ENCODE measurements at regions of chr10 and their contacts with region 1.

Region 1: GRCh38 chr10:86899670-86900276 is 57.6 kb downstream of the MMRN2 start:
- DNase-seq: peak in 4 of 5 donors; percentile 54 to 73 (median 64)
- ATAC-seq: peak in 3 of 4 donors; percentile 35 to 63 (median 58)
- H3K4me3 ChIP-seq: no peak overlapping the region
- H3K27ac ChIP-seq: peak overlapping the region in 7 of 12 donors; percentile 20 to 87 (median 64)
- H3K4me1 ChIP-seq: peaks cover 0 to 37% (median 18%) of the 10 kb centered on the region in 12 donors
- H3K27me3 ChIP-seq: peaks cover 0 to 6% (median 0%) of the 10 kb centered on the region in 9 donors
- CTCF ChIP-seq: peak; percentile 60 to 85 (median 78)
- POLR2A ChIP-seq: no peak

Region 2: DNA sequence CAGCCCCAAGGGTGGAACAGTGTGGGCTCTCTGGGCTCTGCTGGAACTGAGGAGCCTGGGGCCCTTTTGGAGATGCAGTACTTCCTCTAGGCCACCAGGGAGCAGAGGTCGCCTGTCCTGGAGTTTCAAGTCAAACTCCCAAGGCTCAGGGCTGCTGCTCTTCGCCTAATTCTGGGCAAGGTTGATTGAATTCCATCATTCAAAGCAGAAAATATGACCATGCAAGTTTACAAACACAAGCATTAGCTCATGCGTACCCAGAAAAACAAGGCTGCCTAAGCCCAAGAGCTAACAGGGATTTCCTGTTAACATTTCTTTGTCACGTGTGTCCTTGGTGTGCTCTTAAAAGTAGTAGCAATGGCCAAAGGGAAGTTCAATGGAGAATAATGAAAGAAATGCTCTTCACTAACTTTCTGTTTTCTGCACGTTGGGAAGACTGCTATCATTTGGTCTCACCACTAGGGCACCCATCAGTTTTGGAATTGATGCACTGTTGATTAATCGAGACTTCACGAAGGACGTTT is 211.3 kb before region 1 on chr10:
- intact Hi-C with region 1: loop called in 9 of 10 experiments (anchors 1 to 5 kb)
- DNase-seq: peak in 4 of 5 donors; percentile 52 to 73 (median 70)
- ATAC-seq: no peak
- H3K4me3 ChIP-seq: no peak overlapping the region
- H3K27ac ChIP-seq: peak overlapping the region in 11 of 12 donors; percentile 22 to 99 (median 40)
- H3K4me1 ChIP-seq: peaks cover 0 to 72% (median 25%) of the 10 kb centered on the region in 12 donors
- H3K27me3 ChIP-seq: peaks cover 0 to 2% (median 0%) of the 10 kb centered on the region in 9 donors
- CTCF ChIP-seq: peak; percentile 68 to 85 (median 80)
- POLR2A ChIP-seq: no peak

Region 3: DNA sequence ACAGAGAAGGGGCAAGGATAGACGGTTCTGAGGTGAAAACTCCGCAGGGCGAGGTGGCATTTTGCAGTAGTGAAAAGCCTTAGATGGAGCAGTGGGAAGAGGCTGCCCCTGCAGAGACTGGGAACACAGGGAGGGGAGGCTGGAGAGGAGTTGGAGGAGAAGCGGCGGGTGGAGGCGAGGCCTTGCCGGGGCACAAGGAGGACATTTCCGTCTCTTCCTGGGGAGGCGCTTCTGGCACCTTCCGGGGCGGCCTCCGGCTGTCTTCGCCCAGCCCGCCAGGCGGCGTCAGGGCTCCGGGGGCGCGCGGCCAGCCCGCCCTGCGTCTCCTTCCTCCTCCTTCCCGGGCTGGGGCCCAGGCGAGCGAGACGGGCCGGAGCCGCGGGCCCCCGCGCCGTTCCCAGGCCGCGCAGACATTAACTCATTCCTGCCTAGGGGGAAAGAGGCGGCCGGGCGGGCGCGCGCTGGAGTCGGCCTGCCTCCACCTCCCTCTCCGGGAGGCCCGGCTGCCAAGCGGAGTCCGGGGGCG is 188.7 kb before region 1 on chr10:
- intact Hi-C with region 1: loop called in 5 of 10 experiments (anchors 1 to 10 kb)
- DNase-seq: peak; percentile 89 to 95 (median 89)
- ATAC-seq: peak; percentile 5 to 70 (median 65)
- H3K4me3 ChIP-seq: peak overlapping the region; percentile 40 to 84 (median 67)
- H3K27ac ChIP-seq: peak overlapping the region; percentile 64 to 98 (median 90)
- H3K4me1 ChIP-seq: peaks cover 4 to 81% (median 22%) of the 10 kb centered on the region in 12 donors
- H3K27me3 ChIP-seq: peaks cover 0 to 10% (median 0%) of the 10 kb centered on the region in 9 donors
- CTCF ChIP-seq: peak; percentile 63 to 93 (median 82)
- POLR2A ChIP-seq: peak in 1 of 2 donors; percentile 68

Region 4: GRCh38 chr10:86744067-86744725 is 155.6 kb before region 1 on chr10:
- intact Hi-C with region 1: loop called in 1 of 10 experiments (anchors 5 kb)
- DNase-seq: no peak
- ATAC-seq: peak in 1 of 4 donors; percentile 3
- H3K4me3 ChIP-seq: no peak overlapping the region
- H3K27ac ChIP-seq: peak overlapping the region in 7 of 12 donors; percentile 10 to 85 (median 32)
- H3K4me1 ChIP-seq: peaks cover 0 to 11% (median 4%) of the 10 kb centered on the region in 12 donors
- H3K27me3 ChIP-seq: peaks cover 0 to 30% (median 7%) of the 10 kb centered on the region in 9 donors
- CTCF ChIP-seq: no peak
- POLR2A ChIP-seq: no peak

Region 5: GRCh38 chr10:87068281-87068680 is 168.5 kb after region 1 on chr10:
- intact Hi-C with region 1: no loop called
- DNase-seq: no peak
- ATAC-seq: no peak
- H3K4me3 ChIP-seq: no peak overlapping the region
- H3K27ac ChIP-seq: no peak overlapping the region
- H3K4me1 ChIP-seq: no peaks in the 10 kb centered on the region
- H3K27me3 ChIP-seq: no peaks in the 10 kb centered on the region
- CTCF ChIP-seq: no peak
- POLR2A ChIP-seq: no peak